HCT116 (cell line): ENCODE measurements at regions of chr3 and their contacts with region 1.

Region 1: GRCh38 chr3:172710664-172711453 is at the start of gene NCEH1:
- DNase-seq: peak; percentile 98
- ATAC-seq: peak; percentile 97
- H3K4me3 ChIP-seq: peak within 1 kb of the TSS; percentile 62 to 91
- H3K27ac ChIP-seq: peak within 1 kb of the TSS; percentile 92
- H3K4me1 ChIP-seq: peaks cover 15 to 27% of the 10 kb centered on the region in 2 experiments
- H3K27me3 ChIP-seq: no peaks in the 10 kb centered on the region
- CTCF ChIP-seq: peak; percentile 79 to 87 (median 87); a peak in 5 of 6 replicates
- POLR2A ChIP-seq: peak; percentile 83
- RAD21 ChIP-seq: peak; percentile 86
- total RNA-seq, gene NCEH1: 11.5 TPM

Region 2: DNA sequence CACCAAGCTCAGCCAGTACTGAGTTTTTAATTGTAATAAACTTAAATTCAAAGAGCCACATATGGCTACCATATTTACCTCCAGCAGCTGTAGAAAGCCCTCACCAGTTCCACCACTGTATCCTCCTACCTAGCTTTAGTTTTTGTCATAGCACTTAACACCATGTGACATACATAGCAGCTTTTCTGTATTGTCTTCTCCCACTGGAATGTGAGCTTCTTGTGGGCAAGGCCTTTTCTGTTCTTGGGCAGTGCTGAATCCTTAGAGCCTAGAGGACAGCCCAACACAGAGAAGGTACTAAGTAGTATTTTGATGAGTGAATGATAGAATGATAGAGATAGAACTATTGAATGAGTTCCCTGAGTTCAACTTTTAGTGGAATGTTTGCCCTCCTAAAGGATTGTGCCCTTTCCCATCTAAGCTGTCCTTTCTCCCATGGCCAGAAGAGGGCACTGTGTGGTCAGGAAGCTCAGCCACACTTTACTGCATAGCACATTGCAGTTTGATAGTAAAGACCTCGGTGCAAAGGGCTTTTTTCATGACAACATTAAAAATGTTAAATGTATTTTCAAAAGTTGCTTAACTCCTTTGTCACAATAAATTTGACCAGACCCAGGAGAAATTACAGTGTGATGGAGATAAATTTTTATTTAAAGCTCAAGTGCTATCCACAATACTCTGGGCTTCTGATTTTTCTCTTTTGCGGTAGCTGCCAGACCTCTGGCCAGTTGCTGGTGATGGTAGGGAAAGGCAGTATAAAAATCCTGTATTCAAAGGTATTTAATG is 378.4 kb before region 1 on chr3:
- CTCF ChIA-PET with region 1: no interaction called
- POLR2A ChIA-PET with region 1: no interaction called
- RAD21 ChIA-PET with region 1: no interaction called
- intact Hi-C with region 1: no loop called
- DNase-seq: no peak
- ATAC-seq: peak; percentile 94
- H3K4me3 ChIP-seq: no peak overlapping the region
- H3K27ac ChIP-seq: no peak overlapping the region
- H3K4me1 ChIP-seq: no peaks in the 10 kb centered on the region
- H3K27me3 ChIP-seq: no peaks in the 10 kb centered on the region
- CTCF ChIP-seq: peak; percentile 71 to 96 (median 92)
- POLR2A ChIP-seq: no peak
- RAD21 ChIP-seq: peak; percentile 78

Region 3: GRCh38 chr3:172750368-172751174 is 39.7 kb after region 1 on chr3 and contains the start of gene ECT2:
- CTCF ChIA-PET with region 1: interaction called, 4 read pairs
- POLR2A ChIA-PET with region 1: interaction called, 3 read pairs
- RAD21 ChIA-PET with region 1: no interaction called
- intact Hi-C with region 1: loop called (anchors 2 kb)
- DNase-seq: peak; percentile 100
- ATAC-seq: peak; percentile 96
- H3K4me3 ChIP-seq: peak within 1 kb of the TSS; percentile 83 to 92
- H3K27ac ChIP-seq: peak within 1 kb of the TSS; percentile 71
- H3K4me1 ChIP-seq: peaks cover 21 to 49% of the 10 kb centered on the region in 2 experiments
- H3K27me3 ChIP-seq: no peaks in the 10 kb centered on the region
- CTCF ChIP-seq: peak; percentile 46 to 64 (median 62); a peak in 5 of 6 replicates
- POLR2A ChIP-seq: no peak
- RAD21 ChIP-seq: peak; percentile 52
- total RNA-seq, gene ECT2: 95.6 TPM